WTC11 (cell line): ENCODE measurements at regions of chr7 and their contacts with region 1.

Region 1: GRCh38 chr7:151439855-151440798 is at the start of gene CRYGN:
- DNase-seq: peak; percentile 78
- ATAC-seq: peak; percentile 87
- H3K4me3 Mint-ChIP-seq: peak within 1 kb of the TSS; percentile 77
- H3K27ac Mint-ChIP-seq: no peak within 1 kb of the TSS
- H3K4me1 Mint-ChIP-seq: peaks cover 31% of the 10 kb centered on the region
- H3K27me3 Mint-ChIP-seq: peaks cover 8% of the 10 kb centered on the region
- CTCF ChIP-seq: no peak
- total RNA-seq, gene CRYGN: 1.0 to 1.6 TPM (median 1.5 TPM) in 3 replicates

Region 2: GRCh38 chr7:151376218-151376902 is 63.8 kb before region 1 on chr7:
- CTCF ChIA-PET with region 1: no interaction called
- POLR2A ChIA-PET with region 1: no interaction called
- DNase-seq: no peak
- ATAC-seq: no peak
- H3K4me3 Mint-ChIP-seq: no peak overlapping the region
- H3K27ac Mint-ChIP-seq: no peak overlapping the region
- H3K4me1 Mint-ChIP-seq: peaks cover 19% of the 10 kb centered on the region
- H3K27me3 Mint-ChIP-seq: no peaks in the 10 kb centered on the region
- CTCF ChIP-seq: no peak

Region 3: GRCh38 chr7:151408839-151409666 is 31.1 kb before region 1 on chr7:
- CTCF ChIA-PET with region 1: interaction called, 10 read pairs
- POLR2A ChIA-PET with region 1: interaction called, 4 read pairs
- DNase-seq: peak; percentile 39
- ATAC-seq: peak; percentile 46
- H3K4me3 Mint-ChIP-seq: peak overlapping the region; percentile 74
- H3K27ac Mint-ChIP-seq: peak overlapping the region; percentile 22; the same call in 1 of the 2 replicates
- H3K4me1 Mint-ChIP-seq: peaks cover 38% of the 10 kb centered on the region
- H3K27me3 Mint-ChIP-seq: peaks cover 39% of the 10 kb centered on the region
- CTCF ChIP-seq: no peak